ENCODE measurements at regions of chr12 and their contacts with region 1.

Region 1: GRCh38 chr12:75526655-75527511 is 15.5 kb upstream of the KRR1 start:
- DNase-seq: no peak
- H3K4me3 Mint-ChIP-seq: no peak overlapping the region
- H3K27ac Mint-ChIP-seq: no peak overlapping the region
- H3K4me1 Mint-ChIP-seq: peaks cover 3% of the 10 kb centered on the region
- H3K27me3 Mint-ChIP-seq: peaks cover 27% of the 10 kb centered on the region

Region 2: GRCh38 chr12:75471902-75472890 is 54.7 kb before region 1 on chr12:
- CTCF ChIA-PET with region 1: no interaction called
- intact Hi-C with region 1: no loop called
- DNase-seq: no peak
- H3K4me3 Mint-ChIP-seq: no peak overlapping the region
- H3K27ac Mint-ChIP-seq: no peak overlapping the region
- H3K4me1 Mint-ChIP-seq: peaks cover 7% of the 10 kb centered on the region
- H3K27me3 Mint-ChIP-seq: no peaks in the 10 kb centered on the region

Region 3: DNA sequence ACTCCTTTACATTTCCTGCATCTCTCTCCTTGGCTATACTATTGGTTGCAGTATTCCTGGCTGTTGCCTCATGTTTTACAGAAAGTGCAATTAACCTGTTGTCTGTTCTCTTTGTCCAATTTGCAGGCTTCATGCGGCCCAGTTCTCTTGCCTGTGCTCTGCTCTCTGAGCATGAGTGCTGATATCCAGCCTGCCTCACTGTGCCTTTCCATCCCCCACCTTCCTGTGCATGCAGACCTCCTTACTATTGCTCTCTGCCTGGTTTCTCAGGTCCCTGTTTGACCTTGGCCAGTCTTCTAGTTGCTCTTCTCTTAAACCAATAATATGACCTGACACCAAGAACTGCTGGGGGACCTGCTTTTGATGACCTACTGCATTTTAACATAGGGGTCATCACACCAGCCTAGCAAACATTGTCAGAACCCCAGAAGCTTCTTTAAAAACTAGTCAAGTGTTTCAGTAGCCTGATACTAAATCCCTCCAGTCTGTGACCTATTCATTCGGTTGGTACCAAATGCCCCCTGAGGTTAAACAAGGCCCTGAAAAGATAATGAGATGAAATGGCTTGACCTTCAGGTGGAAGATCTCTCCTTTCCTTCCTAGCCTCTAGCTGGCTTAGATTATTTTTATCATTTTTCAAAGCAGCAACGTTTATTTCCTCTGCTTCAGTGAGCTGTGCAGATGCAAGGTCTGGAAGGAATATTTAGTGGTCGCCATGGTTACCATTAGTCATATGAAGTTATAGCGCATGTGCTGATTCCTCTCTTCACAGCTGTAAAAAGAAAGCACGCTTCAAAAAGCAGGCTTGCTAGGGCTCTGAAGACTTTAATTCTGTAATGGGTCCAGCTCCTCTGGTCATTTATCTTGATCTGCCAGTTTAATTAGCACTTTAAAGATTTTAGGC is 288.2 kb after region 1 on chr12:
- CTCF ChIA-PET with region 1: no interaction called
- intact Hi-C with region 1: loop called (anchors 10 kb)
- DNase-seq: no peak
- H3K4me3 Mint-ChIP-seq: no peak overlapping the region
- H3K27ac Mint-ChIP-seq: no peak overlapping the region
- H3K4me1 Mint-ChIP-seq: no peaks in the 10 kb centered on the region
- H3K27me3 Mint-ChIP-seq: no peaks in the 10 kb centered on the region

Region 4: DNA sequence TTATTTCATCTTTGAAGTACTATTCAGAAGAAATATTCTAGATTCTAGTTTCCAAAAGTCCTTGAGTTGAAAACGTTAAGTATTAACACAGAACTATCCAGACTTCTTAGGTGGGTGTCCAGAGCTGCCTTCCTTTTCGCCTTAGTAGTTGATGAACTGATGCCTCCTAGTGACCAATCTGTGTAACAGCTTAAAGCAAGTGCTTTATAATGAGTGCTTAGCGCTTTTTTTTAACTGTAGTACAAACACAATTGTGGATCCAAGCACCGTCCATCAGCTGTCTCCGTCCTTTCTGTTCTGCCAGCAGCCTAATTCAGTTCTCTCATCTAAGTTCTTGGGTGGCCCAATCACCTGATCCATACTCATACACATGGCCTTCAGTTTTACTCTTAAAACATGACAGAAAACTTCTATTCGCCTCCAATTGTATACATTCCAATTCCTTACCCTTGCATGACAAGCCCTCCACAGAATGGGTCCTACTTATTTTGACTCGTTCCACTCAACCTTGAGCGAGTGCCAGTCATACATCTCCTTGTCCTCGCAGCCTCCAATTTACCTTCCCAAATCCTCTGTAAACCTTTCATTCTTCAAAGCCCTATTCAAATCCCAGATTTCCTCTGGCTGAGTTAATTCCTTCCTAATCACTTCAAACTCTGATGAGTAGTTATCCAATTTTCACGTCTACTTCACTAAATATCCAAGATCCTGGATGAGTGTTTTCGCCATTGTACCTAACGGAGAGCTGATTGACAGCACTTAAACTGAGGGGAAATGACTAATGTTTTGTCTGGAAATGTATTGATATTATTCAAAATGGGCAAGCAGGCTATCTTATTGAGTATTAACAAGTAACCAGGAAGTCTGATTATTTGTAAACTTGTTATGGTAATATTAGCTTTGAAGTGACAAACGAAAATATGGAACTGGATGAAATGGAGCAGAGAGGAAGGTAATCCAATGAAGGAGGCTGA is 510.5 kb after region 1 on chr12:
- CTCF ChIA-PET with region 1: interaction called, 35 read pairs
- intact Hi-C with region 1: loop called (anchors 1 kb)
- DNase-seq: peak; percentile 30
- H3K4me3 Mint-ChIP-seq: no peak overlapping the region
- H3K27ac Mint-ChIP-seq: no peak overlapping the region
- H3K4me1 Mint-ChIP-seq: peaks cover 18% of the 10 kb centered on the region
- H3K27me3 Mint-ChIP-seq: no peaks in the 10 kb centered on the region

Region 5: DNA sequence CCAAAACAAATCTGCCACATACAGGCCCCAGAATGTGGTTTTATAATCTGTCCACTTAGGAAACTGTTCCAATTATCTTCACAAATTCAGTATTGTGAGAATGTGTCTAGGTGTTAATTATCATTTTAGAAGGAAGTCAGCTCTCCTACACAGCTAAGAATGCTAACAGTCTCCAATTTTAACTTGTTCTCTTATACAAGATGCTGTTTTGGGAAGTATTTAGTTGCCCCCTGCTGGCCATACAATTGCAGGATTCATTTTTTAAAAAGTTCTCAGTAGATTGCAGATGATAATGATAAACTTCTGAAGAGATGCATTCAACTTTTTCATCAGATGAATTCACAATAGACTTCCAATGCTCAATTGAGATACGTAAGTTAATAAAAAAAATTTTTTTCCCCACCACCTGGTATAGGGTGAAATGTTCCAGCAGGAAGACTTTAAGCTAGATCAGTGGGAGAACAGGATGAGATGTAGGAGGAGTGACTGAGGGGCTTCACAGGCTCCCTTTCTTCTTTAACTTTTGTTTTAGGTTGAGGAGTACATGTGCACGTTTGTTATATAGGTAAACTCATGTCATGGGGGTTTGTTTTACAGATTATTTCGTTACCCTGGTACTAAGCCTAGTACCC is 1060.0 kb after region 1 on chr12:
- CTCF ChIA-PET with region 1: no interaction called
- intact Hi-C with region 1: loop called (anchors 2 kb)
- DNase-seq: peak; percentile 56
- H3K4me3 Mint-ChIP-seq: no peak overlapping the region
- H3K27ac Mint-ChIP-seq: no peak overlapping the region
- H3K4me1 Mint-ChIP-seq: no peaks in the 10 kb centered on the region
- H3K27me3 Mint-ChIP-seq: no peaks in the 10 kb centered on the region